ENCODE measurements at regions of chr10 and their contacts with region 1.

Region 1: GRCh38 chr10:79331709-79332108 is 15.6 kb upstream of the PPIF start:
- DNase-seq: peak; percentile 87
- H3K4me3 Mint-ChIP-seq: peak overlapping the region; percentile 40
- H3K27ac Mint-ChIP-seq: peak overlapping the region; percentile 94
- H3K4me1 Mint-ChIP-seq: peaks cover 58% of the 10 kb centered on the region
- H3K27me3 Mint-ChIP-seq: no peaks in the 10 kb centered on the region

Region 2: GRCh38 chr10:78029269-78030226 is 1302.2 kb before region 1 on chr10 and contains the start of gene POLR3A:
- intact Hi-C with region 1: loop called (anchors 5 kb)
- DNase-seq: peak; percentile 89
- H3K4me3 Mint-ChIP-seq: peak within 1 kb of the TSS; percentile 99
- H3K27ac Mint-ChIP-seq: peak within 1 kb of the TSS; percentile 91
- H3K4me1 Mint-ChIP-seq: peaks cover 28% of the 10 kb centered on the region
- H3K27me3 Mint-ChIP-seq: no peaks in the 10 kb centered on the region
- total RNA-seq, gene POLR3A: 29.5 and 30.8 TPM in 2 replicates

Region 3: DNA sequence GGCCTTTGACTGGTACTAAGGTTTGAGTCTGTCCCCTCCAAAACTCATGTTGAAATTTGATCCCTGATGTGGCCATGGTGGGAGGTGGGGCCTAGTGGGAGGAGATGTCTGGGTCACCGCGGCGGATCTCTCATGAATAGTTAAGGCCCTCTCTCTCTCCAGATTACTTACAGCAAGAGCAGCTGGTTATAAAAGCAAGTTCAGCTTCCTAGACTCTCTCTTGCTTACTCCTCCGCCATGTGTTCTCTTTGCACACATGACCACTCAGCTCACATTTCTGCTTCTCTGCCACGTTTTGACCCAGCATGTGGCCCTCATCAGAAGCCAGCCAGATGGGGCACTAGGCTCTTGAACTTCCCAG is 292.9 kb before region 1 on chr10:
- intact Hi-C with region 1: no loop called
- DNase-seq: no peak
- H3K4me3 Mint-ChIP-seq: no peak overlapping the region
- H3K27ac Mint-ChIP-seq: no peak overlapping the region
- H3K4me1 Mint-ChIP-seq: no peaks in the 10 kb centered on the region
- H3K27me3 Mint-ChIP-seq: peaks cover 33% of the 10 kb centered on the region

Region 4: GRCh38 chr10:79242620-79243152 is 89.0 kb before region 1 on chr10:
- intact Hi-C with region 1: loop called (anchors 2 kb)
- DNase-seq: peak; percentile 65
- H3K4me3 Mint-ChIP-seq: peak overlapping the region; percentile 81
- H3K27ac Mint-ChIP-seq: peak overlapping the region; percentile 83
- H3K4me1 Mint-ChIP-seq: peaks cover 71% of the 10 kb centered on the region
- H3K27me3 Mint-ChIP-seq: no peaks in the 10 kb centered on the region

Region 5: DNA sequence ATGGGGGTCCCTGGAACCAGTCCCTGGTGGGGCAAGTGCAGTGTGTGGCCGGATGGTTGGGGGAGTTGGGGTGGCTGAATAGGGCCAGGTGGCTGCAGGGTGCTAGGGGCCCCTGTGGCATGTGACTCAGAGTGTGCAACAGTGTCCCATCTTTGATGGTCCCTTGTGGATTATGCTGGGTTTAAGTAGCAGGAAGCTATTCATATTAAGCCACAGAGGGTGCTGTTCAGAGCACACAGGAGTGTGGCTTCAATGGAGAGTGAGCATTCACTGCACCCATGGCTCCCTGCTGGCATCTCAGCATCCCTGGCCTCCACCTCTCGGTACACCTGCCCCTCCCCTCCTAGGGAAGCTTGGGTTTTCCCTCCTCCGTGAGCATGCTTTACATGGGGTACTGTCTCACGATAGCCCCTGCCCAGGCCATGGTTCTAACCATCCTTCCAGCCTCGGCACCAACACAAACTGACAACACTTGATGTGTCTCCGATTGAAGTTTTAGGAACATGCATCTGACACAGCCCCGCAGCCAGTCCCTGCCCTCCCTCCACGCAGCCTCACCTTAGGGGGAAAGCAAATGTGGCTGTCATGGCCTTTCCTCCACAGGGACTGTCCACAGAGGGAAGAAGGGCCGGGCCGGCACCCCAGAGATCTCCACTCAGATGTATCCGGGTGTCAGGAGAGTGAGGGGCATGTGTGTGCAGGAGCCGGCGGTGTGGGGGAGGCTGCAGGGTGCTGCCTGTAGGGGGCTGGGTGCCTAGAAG is 14.9 kb before region 1 on chr10:
- intact Hi-C with region 1: loop called (anchors 1 kb)
- DNase-seq: peak; percentile 34
- H3K4me3 Mint-ChIP-seq: peak overlapping the region; percentile 65
- H3K27ac Mint-ChIP-seq: peak overlapping the region; percentile 95
- H3K4me1 Mint-ChIP-seq: peaks cover 71% of the 10 kb centered on the region
- H3K27me3 Mint-ChIP-seq: no peaks in the 10 kb centered on the region

Region 6: DNA sequence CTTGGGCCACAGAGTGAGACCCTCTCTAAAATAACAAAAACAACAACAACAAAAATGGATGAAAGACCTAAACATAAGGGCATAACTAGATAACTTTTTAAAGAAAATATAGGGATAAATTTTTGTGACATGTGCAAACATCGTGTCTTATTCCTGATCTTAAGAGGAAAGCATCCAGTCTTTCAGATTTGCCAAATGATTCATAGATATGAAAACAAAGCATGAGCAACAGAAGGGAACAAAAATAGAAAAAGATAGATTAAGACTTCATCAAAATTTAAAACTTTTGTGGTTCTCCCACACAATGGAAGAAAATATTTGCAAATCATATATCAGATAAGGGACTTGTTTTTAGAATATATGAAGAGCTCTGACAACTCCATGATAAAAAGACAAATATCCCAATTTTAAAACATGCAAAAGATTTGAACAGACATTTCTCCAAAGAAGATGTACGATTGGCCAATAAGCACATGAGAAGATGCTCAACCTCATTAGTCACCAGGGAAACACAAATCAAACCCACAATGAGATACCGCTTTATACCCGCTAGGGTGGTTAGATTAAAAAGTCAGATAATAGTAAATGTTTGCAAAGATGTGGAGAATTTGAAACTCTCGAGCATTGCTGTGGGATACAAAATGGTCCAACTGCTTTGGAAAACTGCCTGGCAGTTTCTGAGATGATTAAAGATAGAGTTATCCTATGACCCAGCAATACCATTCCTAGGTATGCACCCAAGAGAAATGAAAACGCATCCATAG is 35.9 kb after region 1 on chr10:
- intact Hi-C with region 1: no loop called
- DNase-seq: no peak
- H3K4me3 Mint-ChIP-seq: no peak overlapping the region
- H3K27ac Mint-ChIP-seq: no peak overlapping the region
- H3K4me1 Mint-ChIP-seq: no peaks in the 10 kb centered on the region
- H3K27me3 Mint-ChIP-seq: peaks cover 61% of the 10 kb centered on the region

Region 7: GRCh38 chr10:79445141-79445976 is 113.7 kb after region 1 on chr10 and contains the start of gene ZCCHC24:
- intact Hi-C with region 1: loop called (anchors 1 kb)
- DNase-seq: peak; percentile 91
- H3K4me3 Mint-ChIP-seq: peak within 1 kb of the TSS; percentile 87
- H3K27ac Mint-ChIP-seq: peak within 1 kb of the TSS; percentile 68
- H3K4me1 Mint-ChIP-seq: peaks cover 21% of the 10 kb centered on the region
- H3K27me3 Mint-ChIP-seq: peaks cover 56% of the 10 kb centered on the region
- total RNA-seq, gene ZCCHC24: 0.52 and 0.59 TPM in 2 replicates

Region 8: DNA sequence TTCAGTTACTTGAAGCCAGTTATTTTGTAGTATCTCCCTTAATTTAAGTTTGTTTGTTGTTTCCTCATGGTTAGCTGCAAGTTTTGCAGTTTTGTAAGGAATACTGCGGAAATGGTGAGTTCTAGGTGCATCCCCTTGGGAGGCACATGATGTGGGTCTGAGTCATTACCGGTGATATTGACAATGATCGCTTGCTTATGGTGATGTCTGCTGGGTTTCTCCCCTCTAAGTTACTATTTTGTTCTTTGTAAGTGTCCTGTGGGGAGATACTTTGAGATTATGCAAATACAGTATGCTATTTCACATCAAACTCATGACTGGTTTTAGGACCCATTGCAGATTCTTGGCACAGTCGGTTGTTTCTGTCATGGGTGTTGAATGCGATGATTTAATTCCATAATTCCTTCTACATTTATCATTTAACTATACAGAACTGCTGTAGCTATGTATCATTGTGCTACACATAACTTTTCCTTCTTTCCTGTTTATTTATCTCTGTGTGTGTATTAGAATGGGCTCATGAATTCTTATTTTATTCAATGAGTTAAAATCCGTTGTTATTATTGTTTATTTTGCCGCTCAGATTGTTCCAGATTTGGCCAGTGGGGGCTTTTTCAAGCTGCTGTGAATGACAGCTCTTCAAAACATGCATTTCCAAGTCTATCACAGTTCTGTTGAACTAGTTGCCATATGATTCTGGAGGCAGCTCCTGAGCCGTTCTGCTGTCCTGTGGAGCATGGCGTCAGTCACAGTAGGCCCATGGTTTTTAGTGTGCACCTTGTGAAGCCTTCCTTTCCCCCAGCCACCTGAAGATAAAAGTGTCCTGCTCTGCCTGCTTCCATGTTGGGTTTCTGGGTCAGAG is 1140.8 kb after region 1 on chr10:
- intact Hi-C with region 1: loop called (anchors 5 kb)
- DNase-seq: peak; percentile 34
- H3K4me3 Mint-ChIP-seq: peak overlapping the region; percentile 48
- H3K27ac Mint-ChIP-seq: peak overlapping the region; percentile 97
- H3K4me1 Mint-ChIP-seq: peaks cover 80% of the 10 kb centered on the region
- H3K27me3 Mint-ChIP-seq: no peaks in the 10 kb centered on the region

Measured in activated T-helper 1 cell treated with anti-CD3 and anti-CD28 coated beads, Interleukin-12 subunit alpha, Interleukin-12 subunit beta, Interleukin-2, Interleukin-4 antibody, amounts not matched to agents 30 ng/mL and 10 ng/mL and 1 ng/mL, durations not matched to agents 14 hours and 24 hours and 36 hours (primary cell).